Adrenal gland (tissue), 19 donors: ENCODE measurements at regions of chr2 and their contacts with region 1.

Region 1: GRCh38 chr2:217785544-217786045 is 217.2 kb downstream of the TNS1 start:
- DNase-seq: peak; percentile 74 to 95 (median 84)
- H3K4me3 ChIP-seq: no peak overlapping the region
- H3K27ac ChIP-seq: peak overlapping the region in 1 of 5 donors; percentile 36
- H3K4me1 ChIP-seq: peaks cover 0 to 26% of the 10 kb centered on the region in 2 donors
- H3K27me3 ChIP-seq: no peaks in the 10 kb centered on the region
- CTCF ChIP-seq: peak; percentile 91 to 99 (median 97)
- POLR2A ChIP-seq: no peak

Region 2: GRCh38 chr2:217599906-217600305 is 185.7 kb before region 1 on chr2:
- intact Hi-C with region 1: no loop called
- DNase-seq: no peak
- H3K4me3 ChIP-seq: no peak overlapping the region
- H3K27ac ChIP-seq: no peak overlapping the region
- H3K4me1 ChIP-seq: no peaks in the 10 kb centered on the region
- H3K27me3 ChIP-seq: no peaks in the 10 kb centered on the region
- CTCF ChIP-seq: no peak
- POLR2A ChIP-seq: no peak

Region 3: GRCh38 chr2:217886720-217887309 is 101.2 kb after region 1 on chr2:
- intact Hi-C with region 1: loop called (anchors 5 kb)
- DNase-seq: peak; percentile 77 to 90 (median 78)
- H3K4me3 ChIP-seq: no peak overlapping the region
- H3K27ac ChIP-seq: peak overlapping the region in 2 of 5 donors; percentile 68 to 71
- H3K4me1 ChIP-seq: peaks cover 0 to 37% of the 10 kb centered on the region in 2 donors
- H3K27me3 ChIP-seq: no peaks in the 10 kb centered on the region
- CTCF ChIP-seq: peak; percentile 79 to 90 (median 85)
- POLR2A ChIP-seq: no peak

Region 4: DNA sequence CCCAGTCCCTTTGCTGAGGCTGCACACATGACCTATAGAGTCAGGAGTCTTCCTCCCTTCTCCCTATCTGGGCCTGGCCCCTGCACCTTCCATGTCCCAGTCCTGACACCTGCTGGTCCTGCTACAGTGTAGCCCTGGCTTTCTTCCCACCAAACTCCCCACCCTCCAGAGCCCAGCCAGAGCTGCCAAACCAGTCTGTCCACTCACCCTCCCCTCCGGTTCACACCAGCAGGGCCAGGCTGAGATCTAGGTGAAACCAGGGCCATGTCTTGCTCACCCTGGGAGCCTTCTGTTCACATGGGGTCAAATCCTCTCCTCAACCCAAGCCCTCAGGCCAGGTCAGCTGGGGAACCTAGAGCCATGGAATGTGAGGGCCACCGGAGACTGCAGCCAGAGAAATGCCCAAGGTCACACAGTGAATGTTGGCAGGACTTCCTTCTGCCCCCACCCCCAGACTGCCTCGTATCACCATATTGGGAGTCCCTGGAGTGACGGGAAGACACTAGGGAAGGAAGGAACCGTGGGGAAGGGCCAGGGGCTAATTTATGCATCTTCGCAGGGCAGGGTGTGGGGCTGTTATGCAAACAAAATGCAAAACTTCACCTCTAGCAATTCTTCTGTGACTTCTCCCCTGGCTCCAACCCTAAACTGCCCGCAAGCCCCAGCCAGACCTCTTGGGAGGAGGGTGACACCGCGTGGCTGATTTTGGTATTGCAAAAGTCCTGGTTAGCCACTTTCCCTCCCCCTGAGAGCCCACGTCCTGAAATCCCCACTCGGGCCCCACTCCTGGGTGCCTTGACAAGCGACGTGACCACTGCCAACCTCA is 202.6 kb after region 1 on chr2:
- intact Hi-C with region 1: loop called (anchors 5 kb)
- DNase-seq: peak; percentile 89 to 96 (median 92)
- H3K4me3 ChIP-seq: no peak overlapping the region
- H3K27ac ChIP-seq: peak overlapping the region; percentile 40 to 84 (median 74)
- H3K4me1 ChIP-seq: peaks cover 25 to 34% of the 10 kb centered on the region in 2 donors
- H3K27me3 ChIP-seq: no peaks in the 10 kb centered on the region
- CTCF ChIP-seq: peak; percentile 90 to 98 (median 94)
- POLR2A ChIP-seq: no peak

Region 5: GRCh38 chr2:217993817-217994463 is 208.3 kb after region 1 on chr2:
- intact Hi-C with region 1: loop called (anchors 5 kb)
- DNase-seq: peak; percentile 68 to 88 (median 83)
- H3K4me3 ChIP-seq: no peak overlapping the region
- H3K27ac ChIP-seq: peak overlapping the region; percentile 58 to 95 (median 79)
- H3K4me1 ChIP-seq: peaks cover 54 to 73% of the 10 kb centered on the region in 2 donors
- H3K27me3 ChIP-seq: no peaks in the 10 kb centered on the region
- CTCF ChIP-seq: peak; percentile 66 to 78 (median 73)
- POLR2A ChIP-seq: no peak

Region 6: GRCh38 chr2:218033590-218034496 is 248.2 kb after region 1 on chr2:
- intact Hi-C with region 1: loop called (anchors 2 to 5 kb)
- DNase-seq: peak in 3 of 7 donors; percentile 12 to 56 (median 23)
- H3K4me3 ChIP-seq: no peak overlapping the region
- H3K27ac ChIP-seq: peak overlapping the region in 1 of 5 donors; percentile 54
- H3K4me1 ChIP-seq: peaks cover 0 to 4% of the 10 kb centered on the region in 2 donors
- H3K27me3 ChIP-seq: no peaks in the 10 kb centered on the region
- CTCF ChIP-seq: no peak
- POLR2A ChIP-seq: peak in 1 of 2 donors; percentile 29

Region 7: DNA sequence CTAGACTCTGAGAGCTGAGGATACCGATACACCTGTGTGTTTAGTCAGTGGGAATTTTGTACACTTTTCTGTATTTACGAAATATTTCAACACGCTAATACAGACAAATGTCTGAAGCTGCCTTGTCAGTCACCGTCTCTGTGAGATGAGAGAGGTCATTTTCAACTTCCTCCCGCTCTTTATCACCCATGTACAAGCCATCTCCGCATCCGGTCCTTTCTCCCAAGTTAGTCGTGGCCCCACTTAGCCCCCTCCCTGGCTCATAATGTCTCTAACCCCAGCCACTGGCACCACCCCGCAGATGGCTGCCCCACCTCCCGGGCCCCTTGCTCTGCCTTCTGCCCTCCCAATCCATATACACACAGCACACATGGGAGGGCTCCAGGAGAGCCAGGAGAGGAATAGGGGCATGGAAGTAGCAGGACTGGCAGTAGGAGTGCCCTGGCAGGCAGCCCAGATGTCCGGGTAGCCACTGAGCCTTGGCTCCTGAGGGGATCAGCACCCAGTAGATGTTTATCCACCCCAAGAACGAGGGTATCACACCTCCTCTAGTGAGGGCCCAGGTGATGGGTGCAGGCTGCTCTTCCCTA is 281.4 kb after region 1 on chr2:
- intact Hi-C with region 1: loop called (anchors 5 to 10 kb)
- DNase-seq: peak in 2 of 7 donors; percentile 18 to 52
- H3K4me3 ChIP-seq: no peak overlapping the region
- H3K27ac ChIP-seq: no peak overlapping the region
- H3K4me1 ChIP-seq: no peaks in the 10 kb centered on the region
- H3K27me3 ChIP-seq: no peaks in the 10 kb centered on the region
- CTCF ChIP-seq: no peak
- POLR2A ChIP-seq: no peak

Region 8: GRCh38 chr2:218074031-218074430 is 288.4 kb after region 1 on chr2:
- intact Hi-C with region 1: loop called (anchors 5 to 10 kb)
- DNase-seq: peak in 6 of 7 donors; percentile 33 to 66 (median 53)
- H3K4me3 ChIP-seq: no peak overlapping the region
- H3K27ac ChIP-seq: no peak overlapping the region
- H3K4me1 ChIP-seq: no peaks in the 10 kb centered on the region
- H3K27me3 ChIP-seq: no peaks in the 10 kb centered on the region
- CTCF ChIP-seq: peak; percentile 24 to 48 (median 36)
- POLR2A ChIP-seq: no peak